Gastrocnemius medialis (tissue), 4 donors: ENCODE measurements at regions of chr4 and their contacts with region 1.

Region 1: DNA sequence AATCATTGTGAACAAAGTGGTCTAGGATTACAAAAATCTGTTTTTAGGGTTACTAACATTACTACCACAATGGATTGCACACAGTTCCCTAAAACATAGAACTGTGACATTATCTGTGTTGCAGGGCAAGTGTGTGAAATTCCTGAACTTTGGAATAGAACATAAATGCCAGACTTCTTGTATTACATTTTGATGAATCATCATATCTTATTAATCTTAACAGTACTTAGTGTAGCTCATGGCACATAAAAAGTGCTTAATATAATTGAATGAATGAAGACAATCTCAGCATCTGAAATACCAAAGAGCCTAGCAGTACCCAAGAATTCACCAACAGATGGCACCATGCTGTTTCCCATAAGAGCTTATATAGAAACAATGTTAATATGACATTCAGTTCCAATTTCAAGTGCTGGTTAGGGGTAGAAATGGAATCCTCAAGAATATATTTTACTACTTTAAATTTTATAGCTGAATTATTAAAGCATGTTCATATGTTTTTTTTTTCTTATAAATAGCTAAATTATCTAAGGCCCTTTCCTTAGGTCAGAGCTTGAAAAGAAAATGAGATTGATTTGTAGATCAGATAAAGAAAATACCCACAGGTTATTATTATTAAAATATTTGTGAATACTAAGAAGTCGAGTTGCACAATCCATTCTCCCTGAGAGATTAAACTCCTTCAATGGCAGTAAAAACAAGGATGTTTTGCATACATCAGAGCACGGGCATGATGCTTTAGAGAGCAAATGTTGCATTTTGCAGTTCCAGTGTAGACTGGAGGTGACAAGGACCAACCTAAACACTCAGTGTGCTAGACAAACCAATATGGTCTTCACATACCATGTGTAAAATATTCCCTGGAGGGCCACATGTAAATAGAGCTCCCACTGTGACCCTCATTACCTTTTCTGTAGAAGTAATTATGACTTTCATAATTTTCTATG is 25.7 kb upstream of the SHISA3 start:
- DNase-seq: no peak
- ATAC-seq: no peak
- H3K4me3 ChIP-seq: no peak overlapping the region
- H3K27ac ChIP-seq: no peak overlapping the region
- H3K4me1 ChIP-seq: no peaks in the 10 kb centered on the region
- H3K27me3 ChIP-seq: no peaks in the 10 kb centered on the region
- CTCF ChIP-seq: peak in 3 of 5 experiments; percentile 4 to 50 (median 32)
- POLR2A ChIP-seq: no peak

Region 2: GRCh38 chr4:42519803-42520417 is 148.3 kb after region 1 on chr4:
- in situ Hi-C with region 1: no loop called
- intact Hi-C with region 1: loop called (anchors 5 kb)
- DNase-seq: no peak
- ATAC-seq: peak; percentile 48 to 71
- H3K4me3 ChIP-seq: no peak overlapping the region
- H3K27ac ChIP-seq: no peak overlapping the region
- H3K4me1 ChIP-seq: peaks cover 21 to 29% of the 10 kb centered on the region in 2 donors
- H3K27me3 ChIP-seq: no peaks in the 10 kb centered on the region
- CTCF ChIP-seq: peak; percentile 55 to 73 (median 64)
- POLR2A ChIP-seq: no peak